Dorsolateral prefrontal cortex (tissue), 120 donors: ENCODE measurements at regions of chr7 and their contacts with region 1.

Region 1: DNA sequence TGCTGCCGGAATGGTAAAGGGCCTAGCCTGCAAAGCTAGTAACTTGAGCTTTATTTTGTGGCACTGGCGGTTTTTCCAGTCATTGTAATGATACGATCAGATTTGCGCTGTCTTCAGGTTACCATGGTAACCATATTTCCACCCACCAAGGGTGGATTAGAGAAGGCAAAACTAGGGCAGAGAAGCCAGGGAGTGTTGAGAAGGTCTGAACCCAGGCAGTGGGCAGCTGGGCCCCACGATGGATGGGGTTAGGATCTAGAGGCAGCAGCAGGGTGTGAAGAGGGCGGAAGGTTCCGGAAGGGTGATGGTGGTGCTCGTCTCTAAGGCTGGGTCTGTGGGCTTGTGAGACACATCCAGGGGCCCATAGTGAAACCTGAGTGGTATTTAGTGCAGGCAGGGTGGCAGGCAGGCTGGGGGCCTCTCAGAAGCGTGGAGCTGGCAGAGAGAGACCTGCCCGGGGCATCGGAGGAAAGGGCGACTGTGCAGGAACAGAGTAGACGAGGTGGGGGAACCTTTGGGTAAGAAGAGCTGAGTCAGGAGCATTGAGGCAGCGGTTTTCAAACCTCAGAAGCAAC is 87.9 kb upstream of the GTF2I start:
- DNase-seq: no peak
- H3K4me3 ChIP-seq: no peak overlapping the region
- H3K27ac ChIP-seq: peak overlapping the region in 26 of 59 donors; percentile 1 to 64 (median 31)
- H3K27me3 ChIP-seq: no peaks in the 10 kb centered on the region
- CTCF ChIP-seq: no peak

Region 2: GRCh38 chr7:74417419-74417971 is 152.1 kb before region 1 on chr7:
- intact Hi-C with region 1: loop called (anchors 5 kb)
- DNase-seq: peak; percentile 52 to 82 (median 67)
- H3K4me3 ChIP-seq: no peak overlapping the region
- H3K27ac ChIP-seq: peak overlapping the region in 1 of 59 donors; percentile 36
- H3K27me3 ChIP-seq: peaks cover 0 to 4% (median 0%) of the 10 kb centered on the region in 45 donors
- CTCF ChIP-seq: peak; percentile 70 to 100 (median 97)

Region 3: DNA sequence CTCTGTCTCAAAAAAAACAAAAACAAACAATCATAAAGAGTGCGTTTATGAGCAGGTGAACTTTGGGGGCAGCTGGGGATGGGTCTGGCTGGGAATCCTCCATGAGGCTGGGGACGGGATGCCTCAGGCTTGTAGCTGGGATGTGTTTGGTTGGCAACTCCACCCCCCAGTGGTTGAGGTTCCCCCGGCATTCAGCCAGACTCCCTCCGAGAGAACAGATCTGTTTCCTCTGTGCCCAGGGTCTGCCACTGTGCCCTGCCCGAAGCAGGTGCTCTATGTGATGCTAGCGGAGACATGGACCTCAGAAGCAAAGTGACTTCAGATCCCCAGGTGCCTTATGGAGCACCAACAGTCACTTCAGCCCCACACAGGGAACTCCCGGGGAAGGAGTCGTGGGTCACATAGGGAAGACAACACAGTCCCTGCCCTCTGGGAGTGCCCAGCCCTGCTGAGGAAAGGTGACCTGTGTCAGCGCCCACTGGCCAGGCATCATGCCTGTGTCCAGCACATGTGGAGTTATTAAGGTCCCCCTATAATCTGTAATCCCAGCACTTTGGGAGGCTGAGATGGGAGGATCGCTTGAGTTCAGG is 145.2 kb before region 1 on chr7:
- intact Hi-C with region 1: loop called (anchors 5 kb)
- DNase-seq: no peak
- H3K4me3 ChIP-seq: no peak overlapping the region
- H3K27ac ChIP-seq: no peak overlapping the region
- H3K27me3 ChIP-seq: no peaks in the 10 kb centered on the region
- CTCF ChIP-seq: no peak

Region 4: DNA sequence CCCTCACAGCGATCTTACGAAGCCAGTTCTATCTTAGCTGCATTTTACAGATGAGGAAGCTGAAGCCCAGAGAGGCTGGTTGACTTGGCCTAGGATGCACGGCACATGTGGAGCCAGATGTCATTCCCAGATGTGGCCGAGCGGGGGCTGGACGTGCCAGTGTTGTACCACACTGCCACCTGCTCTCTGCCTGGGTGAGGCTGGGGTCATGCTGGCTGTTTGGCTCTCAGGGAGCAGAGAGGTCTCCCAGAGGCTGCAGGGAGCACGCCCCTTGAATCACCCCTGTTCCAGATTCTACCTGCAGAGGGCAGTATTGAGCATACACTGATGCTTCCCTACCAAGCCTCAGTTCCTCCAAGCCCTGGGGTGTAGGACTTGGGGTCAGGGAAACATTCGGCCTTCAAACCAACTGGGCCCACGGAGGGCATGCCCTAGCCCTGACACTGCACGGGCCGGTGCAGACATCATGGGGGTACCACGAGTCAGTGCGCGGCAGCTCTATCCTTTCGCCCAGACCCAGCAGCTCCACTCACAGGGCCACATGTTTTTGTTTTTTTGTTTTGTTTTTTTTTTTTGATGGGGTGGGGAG is 119.7 kb before region 1 on chr7:
- intact Hi-C with region 1: loop called (anchors 10 kb)
- DNase-seq: peak in 3 of 10 donors; percentile 34 to 36 (median 34)
- H3K4me3 ChIP-seq: no peak overlapping the region
- H3K27ac ChIP-seq: no peak overlapping the region
- H3K27me3 ChIP-seq: no peaks in the 10 kb centered on the region
- CTCF ChIP-seq: peak; percentile 55 to 94 (median 83)

Region 5: GRCh38 chr7:74665296-74665938 is 95.8 kb after region 1 on chr7:
- intact Hi-C with region 1: no loop called
- DNase-seq: no peak
- H3K4me3 ChIP-seq: no peak overlapping the region
- H3K27ac ChIP-seq: peak overlapping the region in 6 of 59 donors; percentile 3 to 85 (median 66)
- H3K27me3 ChIP-seq: no peaks in the 10 kb centered on the region
- CTCF ChIP-seq: no peak